Naive thymus-derived CD4-positive, alpha-beta T cell (primary cell): ENCODE measurements at regions of chr7 and their contacts with region 1.

Region 1: GRCh38 chr7:151232091-151232916 is at the start of gene CHPF2:
- DNase-seq: peak; percentile 74 to 91 (median 84)
- ATAC-seq: peak; percentile 94
- H3K4me3 ChIP-seq: peak within 1 kb of the TSS; percentile 90
- H3K4me3 Mint-ChIP-seq: peak within 1 kb of the TSS; percentile 93 to 100 (median 98)
- H3K27ac ChIP-seq: peak within 1 kb of the TSS; percentile 85
- H3K27ac Mint-ChIP-seq: peak within 1 kb of the TSS; percentile 87 to 99 (median 98)
- H3K4me1 ChIP-seq: peaks cover 19 to 23% of the 10 kb centered on the region in 2 donors
- H3K4me1 Mint-ChIP-seq: peaks cover 30 to 45% (median 39%) of the 10 kb centered on the region in 7 donors
- H3K27me3 ChIP-seq: no peaks in the 10 kb centered on the region
- H3K27me3 Mint-ChIP-seq: peaks cover 0 to 6% (median 0%) of the 10 kb centered on the region in 5 donors
- total RNA-seq, gene CHPF2: 32.3 to 45.8 (median 42.8) TPM

Region 2: GRCh38 chr7:151276666-151277590 is 44.6 kb after region 1 on chr7:
- CTCF ChIA-PET with region 1: no interaction called
- POLR2A ChIA-PET with region 1: interaction called, 4 read pairs
- intact Hi-C with region 1: loop called in 1 of 2 experiments (anchors 2 kb)
- DNase-seq: peak; percentile 32 to 64 (median 55)
- ATAC-seq: peak; percentile 77
- H3K4me3 ChIP-seq: peak overlapping the region; percentile 53
- H3K4me3 Mint-ChIP-seq: peak overlapping the region; percentile 69 to 88 (median 85)
- H3K27ac ChIP-seq: peak overlapping the region; percentile 0
- H3K27ac Mint-ChIP-seq: peak overlapping the region in 8 of 9 donors; percentile 38 to 90 (median 62)
- H3K4me1 ChIP-seq: peaks cover 13 to 20% of the 10 kb centered on the region in 2 donors
- H3K4me1 Mint-ChIP-seq: peaks cover 23 to 39% (median 32%) of the 10 kb centered on the region in 7 donors
- H3K27me3 ChIP-seq: no peaks in the 10 kb centered on the region
- H3K27me3 Mint-ChIP-seq: peaks cover 0 to 32% (median 8%) of the 10 kb centered on the region in 5 donors

Region 3: DNA sequence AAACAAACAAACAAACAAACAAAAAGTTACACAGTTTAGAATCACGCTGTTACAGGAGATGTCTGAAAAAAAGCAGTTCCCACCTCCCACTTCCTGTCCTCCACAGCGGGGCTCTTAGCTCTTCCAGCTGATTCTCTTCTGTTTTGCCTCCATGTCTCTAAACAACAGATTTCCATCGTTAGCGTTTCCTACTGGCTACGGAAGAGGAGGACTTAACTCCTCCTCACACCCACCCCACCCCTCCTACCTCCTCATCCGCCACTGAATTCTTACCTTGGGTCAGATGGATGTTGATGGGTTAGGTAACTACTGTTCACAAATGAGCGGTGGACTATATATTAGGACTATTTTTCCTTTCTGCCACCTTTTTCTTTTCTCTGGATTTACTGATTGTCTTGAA is 72.6 kb after region 1 on chr7:
- CTCF ChIA-PET with region 1: no interaction called
- POLR2A ChIA-PET with region 1: no interaction called
- intact Hi-C with region 1: loop called in 1 of 2 experiments (anchors 5 kb)
- DNase-seq: no peak
- ATAC-seq: no peak
- H3K4me3 ChIP-seq: no peak overlapping the region
- H3K4me3 Mint-ChIP-seq: peak overlapping the region; percentile 6 to 78 (median 63)
- H3K27ac ChIP-seq: no peak overlapping the region
- H3K27ac Mint-ChIP-seq: no peak overlapping the region
- H3K4me1 ChIP-seq: peaks cover 3 to 6% of the 10 kb centered on the region in 2 donors
- H3K4me1 Mint-ChIP-seq: peaks cover 0 to 21% (median 12%) of the 10 kb centered on the region in 7 donors
- H3K27me3 ChIP-seq: no peaks in the 10 kb centered on the region
- H3K27me3 Mint-ChIP-seq: peaks cover 19 to 46% (median 28%) of the 10 kb centered on the region in 5 donors